CD4-positive, alpha-beta T cell (primary cell): ENCODE measurements at regions of chr4 and their contacts with region 1.

Region 1: GRCh38 chr4:17544205-17544604 is 29.2 kb downstream of the CLRN2 start:
- DNase-seq: peak in 2 of 14 experiments; percentile 11 to 38
- ATAC-seq: no peak
- H3K4me3 ChIP-seq: no peak overlapping the region
- H3K4me3 Mint-ChIP-seq: no peak overlapping the region
- H3K27ac ChIP-seq: no peak overlapping the region
- H3K27ac Mint-ChIP-seq: no peak overlapping the region
- H3K4me1 ChIP-seq: no peaks in the 10 kb centered on the region
- H3K4me1 Mint-ChIP-seq: no peaks in the 10 kb centered on the region
- H3K27me3 ChIP-seq: no peaks in the 10 kb centered on the region
- H3K27me3 Mint-ChIP-seq: peaks cover 23% of the 10 kb centered on the region
- CTCF ChIP-seq: no peak

Region 2: DNA sequence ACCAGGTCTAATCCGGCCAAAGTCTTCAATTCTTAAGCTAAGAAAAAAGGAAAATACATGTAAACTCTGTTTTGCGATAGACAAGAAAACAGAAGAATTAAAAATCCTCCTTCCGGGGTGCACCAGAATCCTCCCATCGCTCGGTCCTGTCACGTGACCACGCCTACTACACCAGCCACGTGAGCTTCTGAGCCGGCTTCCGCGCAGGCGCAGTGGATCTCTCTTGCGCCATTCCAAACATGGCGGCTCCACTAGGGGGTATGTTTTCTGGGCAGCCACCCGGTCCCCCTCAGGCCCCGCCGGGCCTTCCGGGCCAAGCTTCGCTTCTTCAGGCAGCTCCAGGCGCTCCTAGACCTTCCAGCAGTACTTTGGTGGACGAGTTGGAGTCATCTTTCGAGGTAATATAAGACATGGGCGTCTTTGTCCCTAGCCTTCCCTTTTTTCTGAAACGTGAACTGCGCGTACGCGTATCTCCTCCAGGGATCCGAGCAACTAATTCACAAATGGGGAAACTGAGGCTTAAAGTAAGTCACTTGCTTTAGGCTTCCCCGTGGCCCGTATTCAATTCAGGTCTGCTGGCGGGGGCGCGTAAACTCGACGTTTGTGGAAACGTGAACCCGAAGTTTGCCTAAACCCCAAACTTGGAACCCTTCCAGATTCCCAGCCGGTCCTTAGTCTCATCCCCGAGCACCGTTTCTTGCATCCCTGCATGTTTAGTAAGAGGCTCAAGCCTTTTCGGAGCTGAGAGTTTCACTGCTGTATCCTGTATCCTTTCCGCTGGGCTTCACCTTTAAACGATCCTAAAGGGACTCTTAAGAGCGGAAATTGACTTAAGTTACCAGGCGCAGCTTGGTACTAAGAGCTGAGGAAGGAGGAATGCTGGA is 70.5 kb after region 1 on chr4 and contains the start of gene MED28:
- CTCF ChIA-PET with region 1: interaction called, 12 read pairs
- POLR2A ChIA-PET with region 1: interaction called, 10 read pairs
- intact Hi-C with region 1: no loop called
- DNase-seq: peak; percentile 90 to 98 (median 94)
- ATAC-seq: peak; percentile 93
- H3K4me3 ChIP-seq: peak within 1 kb of the TSS; percentile 94
- H3K4me3 Mint-ChIP-seq: peak within 1 kb of the TSS; percentile 93
- H3K27ac ChIP-seq: peak within 1 kb of the TSS; percentile 68 to 92
- H3K27ac Mint-ChIP-seq: peak within 1 kb of the TSS; percentile 94
- H3K4me1 ChIP-seq: peaks cover 55% of the 10 kb centered on the region
- H3K4me1 Mint-ChIP-seq: peaks cover 50% of the 10 kb centered on the region
- H3K27me3 ChIP-seq: no peaks in the 10 kb centered on the region
- H3K27me3 Mint-ChIP-seq: no peaks in the 10 kb centered on the region
- CTCF ChIP-seq: no peak
- total RNA-seq, gene MED28: 50.5 to 64.7 TPM

Region 3: GRCh38 chr4:17636696-17637622 is 92.8 kb after region 1 on chr4:
- CTCF ChIA-PET with region 1: interaction called, 10 read pairs
- POLR2A ChIA-PET with region 1: interaction called, 3 read pairs
- intact Hi-C with region 1: loop called (anchors 1 kb)
- DNase-seq: peak; percentile 52 to 81 (median 62)
- ATAC-seq: peak; percentile 83
- H3K4me3 ChIP-seq: no peak overlapping the region
- H3K4me3 Mint-ChIP-seq: no peak overlapping the region
- H3K27ac ChIP-seq: no peak overlapping the region
- H3K27ac Mint-ChIP-seq: no peak overlapping the region
- H3K4me1 ChIP-seq: peaks cover 8% of the 10 kb centered on the region
- H3K4me1 Mint-ChIP-seq: no peaks in the 10 kb centered on the region
- H3K27me3 ChIP-seq: no peaks in the 10 kb centered on the region
- H3K27me3 Mint-ChIP-seq: no peaks in the 10 kb centered on the region
- CTCF ChIP-seq: peak; percentile 93

Region 4: GRCh38 chr4:17702641-17703040 is 158.4 kb after region 1 on chr4:
- CTCF ChIA-PET with region 1: no interaction called
- POLR2A ChIA-PET with region 1: no interaction called
- intact Hi-C with region 1: no loop called
- DNase-seq: no peak
- ATAC-seq: no peak
- H3K4me3 ChIP-seq: no peak overlapping the region
- H3K4me3 Mint-ChIP-seq: no peak overlapping the region
- H3K27ac ChIP-seq: no peak overlapping the region
- H3K27ac Mint-ChIP-seq: no peak overlapping the region
- H3K4me1 ChIP-seq: no peaks in the 10 kb centered on the region
- H3K4me1 Mint-ChIP-seq: no peaks in the 10 kb centered on the region
- H3K27me3 ChIP-seq: no peaks in the 10 kb centered on the region
- H3K27me3 Mint-ChIP-seq: no peaks in the 10 kb centered on the region
- CTCF ChIP-seq: no peak

Region 5: GRCh38 chr4:17810260-17811077 is 266.3 kb after region 1 on chr4 and contains the starts of genes DCAF16 and NCAPG:
- CTCF ChIA-PET with region 1: interaction called, 9 read pairs
- POLR2A ChIA-PET with region 1: no interaction called
- intact Hi-C with region 1: loop called (anchors 1 to 2 kb)
- DNase-seq: peak; percentile 97 to 100 (median 99)
- ATAC-seq: peak; percentile 86
- H3K4me3 ChIP-seq: peak within 1 kb of the TSS; percentile 92
- H3K4me3 Mint-ChIP-seq: peak within 1 kb of the TSS; percentile 97
- H3K27ac ChIP-seq: peak within 1 kb of the TSS; percentile 92 to 96
- H3K27ac Mint-ChIP-seq: peak within 1 kb of the TSS; percentile 96
- H3K4me1 ChIP-seq: peaks cover 20% of the 10 kb centered on the region
- H3K4me1 Mint-ChIP-seq: peaks cover 63% of the 10 kb centered on the region
- H3K27me3 ChIP-seq: no peaks in the 10 kb centered on the region
- H3K27me3 Mint-ChIP-seq: no peaks in the 10 kb centered on the region
- CTCF ChIP-seq: no peak
- total RNA-seq, gene DCAF16: 88.5 to 91.4 TPM
- total RNA-seq, gene NCAPG: 0.58 to 0.61 TPM

Region 6: DNA sequence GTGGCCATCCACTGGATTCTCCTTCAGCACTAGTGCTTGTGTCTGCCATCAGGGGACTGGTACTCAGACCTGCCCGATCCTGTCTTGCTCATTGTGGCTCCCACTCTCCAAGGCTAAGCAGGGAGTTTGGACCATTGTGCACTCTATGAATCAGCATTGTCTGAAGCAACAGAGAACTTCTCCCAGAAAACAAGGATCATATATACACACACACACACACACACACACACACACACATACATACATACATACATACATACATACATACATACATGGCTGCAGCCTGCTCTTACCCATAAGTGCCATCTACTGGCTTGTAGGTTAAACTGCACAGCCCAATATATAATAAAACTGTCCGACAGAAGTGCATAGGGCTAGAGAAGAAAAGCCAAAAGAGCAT is 822.7 kb after region 1 on chr4:
- CTCF ChIA-PET with region 1: no interaction called
- POLR2A ChIA-PET with region 1: no interaction called
- intact Hi-C with region 1: loop called in 1 of 2 experiments (anchors 10 kb)
- DNase-seq: peak in 3 of 14 experiments; percentile 24 to 34 (median 25)
- ATAC-seq: no peak
- H3K4me3 ChIP-seq: no peak overlapping the region
- H3K4me3 Mint-ChIP-seq: no peak overlapping the region
- H3K27ac ChIP-seq: no peak overlapping the region
- H3K27ac Mint-ChIP-seq: no peak overlapping the region
- H3K4me1 ChIP-seq: no peaks in the 10 kb centered on the region
- H3K4me1 Mint-ChIP-seq: no peaks in the 10 kb centered on the region
- H3K27me3 ChIP-seq: no peaks in the 10 kb centered on the region
- H3K27me3 Mint-ChIP-seq: peaks cover 19% of the 10 kb centered on the region
- CTCF ChIP-seq: peak; percentile 29

Region 7: DNA sequence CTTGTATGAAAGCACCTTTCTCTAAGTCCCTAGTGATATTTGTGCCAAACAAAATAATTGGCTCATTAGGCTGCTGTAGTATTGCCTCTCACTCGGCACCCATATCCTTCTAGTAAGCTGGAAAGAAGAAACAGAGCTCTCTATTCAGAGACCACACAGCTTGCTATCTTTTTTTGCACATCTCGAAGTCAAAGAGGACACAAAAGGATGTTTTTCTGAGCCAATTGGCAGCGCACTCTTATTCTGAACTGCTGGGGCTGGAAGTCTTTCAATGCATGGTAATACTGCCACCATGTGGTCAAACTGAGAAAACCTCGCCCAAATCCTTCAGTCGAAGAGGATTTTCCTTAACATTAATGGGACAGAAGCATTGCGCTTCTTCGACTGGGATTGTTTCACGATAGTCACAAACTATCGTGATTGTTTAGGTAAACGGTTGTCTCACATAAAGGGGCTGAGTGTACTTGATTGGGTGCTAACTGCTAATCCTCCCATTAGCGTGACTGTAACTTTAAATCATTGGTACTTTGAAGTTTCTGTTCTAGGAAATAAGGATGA is 1049.3 kb after region 1 on chr4:
- CTCF ChIA-PET with region 1: interaction called, 4 read pairs
- POLR2A ChIA-PET with region 1: no interaction called
- intact Hi-C with region 1: loop called (anchors 1 kb)
- DNase-seq: peak in 13 of 14 experiments; percentile 5 to 77 (median 23)
- ATAC-seq: peak; percentile 62
- H3K4me3 ChIP-seq: no peak overlapping the region
- H3K4me3 Mint-ChIP-seq: no peak overlapping the region
- H3K27ac ChIP-seq: no peak overlapping the region
- H3K27ac Mint-ChIP-seq: no peak overlapping the region
- H3K4me1 ChIP-seq: peaks cover 5% of the 10 kb centered on the region
- H3K4me1 Mint-ChIP-seq: peaks cover 7% of the 10 kb centered on the region
- H3K27me3 ChIP-seq: peaks cover 0 to 9% of the 10 kb centered on the region in 2 experiments
- H3K27me3 Mint-ChIP-seq: peaks cover 26% of the 10 kb centered on the region
- CTCF ChIP-seq: peak; percentile 81